ENCODE measurements at regions of chr7 and their contacts with region 1.

Region 1: DNA sequence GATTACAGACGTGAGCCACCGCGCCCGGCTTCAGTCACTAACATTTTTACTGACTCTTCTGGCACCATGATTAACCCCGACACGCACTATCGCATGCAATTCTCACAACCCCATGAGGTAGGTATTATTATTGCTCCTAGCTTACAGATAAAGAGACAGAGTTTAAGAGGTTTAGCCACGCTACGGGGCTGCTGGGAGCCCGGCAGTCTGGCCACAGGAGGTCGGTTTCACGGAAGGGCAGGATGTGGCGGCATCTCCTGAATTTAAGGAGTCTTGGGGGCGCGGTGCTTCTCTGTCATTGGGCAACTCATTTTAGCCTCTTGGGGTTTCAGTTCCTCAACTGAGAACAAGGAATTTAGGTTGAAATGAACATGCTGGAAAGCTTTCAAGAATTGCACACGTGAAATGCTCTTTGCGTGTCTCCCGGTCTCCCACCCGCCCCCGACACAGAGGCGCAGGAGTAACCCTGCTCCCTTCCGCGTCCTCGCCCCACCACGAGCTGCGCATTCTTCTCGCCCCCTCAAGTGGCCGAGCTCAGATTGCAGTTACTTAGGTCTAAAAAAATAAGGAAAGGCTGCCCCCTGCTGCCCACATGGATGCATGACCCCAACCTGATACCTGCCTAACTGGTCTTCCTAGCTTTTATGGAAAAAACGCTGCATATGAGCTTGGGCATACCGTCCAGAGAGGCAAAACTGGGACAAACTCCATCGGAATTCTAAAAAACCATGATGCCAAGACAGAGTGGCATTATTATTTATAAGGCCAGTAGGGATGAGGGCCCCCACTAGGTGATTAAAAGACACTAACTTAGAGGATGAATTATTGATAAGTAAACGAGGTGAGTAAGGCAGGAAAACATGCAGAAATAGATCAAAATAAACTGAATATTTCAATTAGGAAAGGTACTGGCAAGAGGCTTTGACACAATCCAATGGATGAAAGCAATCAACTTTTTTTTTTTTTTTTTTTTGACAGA is 12.4 kb downstream of the PRSS2 start:
- DNase-seq: peak; percentile 82
- H3K4me3 Mint-ChIP-seq: peak overlapping the region; percentile 67
- H3K27ac Mint-ChIP-seq: peak overlapping the region; percentile 100
- H3K4me1 Mint-ChIP-seq: peaks cover 17% of the 10 kb centered on the region
- H3K27me3 Mint-ChIP-seq: no peaks in the 10 kb centered on the region

Region 2: GRCh38 chr7:142626420-142627035 is 156.7 kb before region 1 on chr7:
- CTCF ChIA-PET with region 1: interaction called, 14 read pairs
- POLR2A ChIA-PET with region 1: no interaction called
- DNase-seq: peak; percentile 80
- H3K4me3 Mint-ChIP-seq: peak overlapping the region; percentile 79
- H3K27ac Mint-ChIP-seq: peak overlapping the region; percentile 90
- H3K4me1 Mint-ChIP-seq: peaks cover 10% of the 10 kb centered on the region
- H3K27me3 Mint-ChIP-seq: peaks cover 4% of the 10 kb centered on the region

Region 3: DNA sequence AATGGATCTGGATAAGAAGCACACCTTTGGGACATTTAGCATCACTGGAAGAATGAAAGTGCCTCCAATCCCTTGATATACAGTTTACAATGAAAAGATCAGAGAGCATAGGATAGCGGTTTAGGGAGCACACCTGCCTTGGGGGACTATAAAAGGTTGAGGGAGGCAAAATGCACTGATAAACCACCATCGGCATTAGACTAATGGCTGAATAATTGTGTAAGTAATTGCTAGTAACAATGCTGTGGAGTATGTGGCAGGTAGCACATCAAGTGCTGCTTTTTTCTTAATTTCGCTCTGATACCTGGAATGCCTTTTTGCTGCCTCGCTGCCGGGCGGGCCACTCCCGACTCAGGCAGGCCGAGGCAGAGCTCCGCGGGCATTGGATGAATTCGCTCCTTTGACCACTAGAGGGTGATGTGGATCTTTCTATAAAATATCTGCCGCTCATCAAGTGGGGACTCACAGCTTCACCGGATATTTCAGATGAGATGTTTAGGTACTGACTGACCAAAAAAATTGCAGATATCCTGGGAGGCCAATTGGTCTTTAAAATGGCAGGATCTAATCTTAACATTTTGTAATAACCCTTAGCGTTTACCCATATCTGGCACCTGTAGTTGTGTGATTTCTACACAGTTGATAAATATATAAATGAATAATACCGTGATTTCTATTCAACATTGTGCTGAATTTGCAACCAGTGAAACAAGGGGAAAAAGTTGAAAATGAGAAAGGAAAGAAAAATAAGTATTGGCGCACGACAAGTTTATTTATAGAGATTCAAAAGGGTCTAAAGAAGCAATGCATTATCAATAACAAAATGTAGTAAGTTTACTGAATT is 150.7 kb before region 1 on chr7:
- CTCF ChIA-PET with region 1: interaction called, 14 read pairs
- POLR2A ChIA-PET with region 1: interaction called, 13 read pairs
- DNase-seq: peak; percentile 62
- H3K4me3 Mint-ChIP-seq: no peak overlapping the region
- H3K27ac Mint-ChIP-seq: no peak overlapping the region
- H3K4me1 Mint-ChIP-seq: peaks cover 19% of the 10 kb centered on the region
- H3K27me3 Mint-ChIP-seq: peaks cover 5% of the 10 kb centered on the region

Region 4: DNA sequence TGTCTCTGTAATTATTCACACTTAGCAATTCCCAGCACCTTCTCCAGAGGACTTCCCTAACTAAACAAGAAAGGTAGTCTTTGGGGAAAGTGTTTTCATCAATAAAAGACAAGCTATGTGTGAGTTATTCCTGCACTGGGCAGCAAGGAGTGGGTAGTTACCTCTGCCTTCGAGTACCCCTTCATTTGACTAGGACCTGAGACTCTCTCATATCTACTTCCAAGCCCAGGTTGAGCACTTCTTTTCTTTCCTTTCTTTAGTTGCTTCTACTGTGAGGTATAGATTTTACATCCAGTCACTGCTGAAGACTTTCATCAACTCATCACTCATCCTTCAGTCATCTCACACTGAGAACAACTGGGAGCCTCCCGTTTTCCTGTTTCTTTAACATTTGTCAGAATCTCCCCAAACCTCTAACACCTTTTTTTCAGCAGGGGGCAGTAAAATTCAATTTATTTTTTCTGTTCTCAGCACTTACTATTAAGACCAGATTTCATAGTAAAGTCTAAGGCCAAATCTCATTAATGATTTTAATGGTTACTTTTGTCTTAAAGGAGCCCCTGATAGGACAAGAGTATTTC is 114.0 kb before region 1 on chr7:
- CTCF ChIA-PET with region 1: interaction called, 19 read pairs
- POLR2A ChIA-PET with region 1: no interaction called
- DNase-seq: no peak
- H3K4me3 Mint-ChIP-seq: no peak overlapping the region
- H3K27ac Mint-ChIP-seq: no peak overlapping the region
- H3K4me1 Mint-ChIP-seq: peaks cover 31% of the 10 kb centered on the region
- H3K27me3 Mint-ChIP-seq: no peaks in the 10 kb centered on the region

Region 5: GRCh38 chr7:142711746-142712619 is 71.2 kb before region 1 on chr7:
- CTCF ChIA-PET with region 1: interaction called, 18 read pairs
- POLR2A ChIA-PET with region 1: interaction called, 4 read pairs
- DNase-seq: peak; percentile 36
- H3K4me3 Mint-ChIP-seq: peak overlapping the region; percentile 66
- H3K27ac Mint-ChIP-seq: peak overlapping the region; percentile 90
- H3K4me1 Mint-ChIP-seq: peaks cover 79% of the 10 kb centered on the region
- H3K27me3 Mint-ChIP-seq: no peaks in the 10 kb centered on the region

Region 6: GRCh38 chr7:142796608-142797385 is 13.6 kb after region 1 on chr7:
- CTCF ChIA-PET with region 1: interaction called, 19 read pairs
- POLR2A ChIA-PET with region 1: interaction called, 66 read pairs
- DNase-seq: no peak
- H3K4me3 Mint-ChIP-seq: peak overlapping the region; percentile 100
- H3K27ac Mint-ChIP-seq: peak overlapping the region; percentile 100
- H3K4me1 Mint-ChIP-seq: peaks cover 64% of the 10 kb centered on the region
- H3K27me3 Mint-ChIP-seq: no peaks in the 10 kb centered on the region

Region 7: GRCh38 chr7:142811154-142811737 is 28.0 kb after region 1 on chr7:
- CTCF ChIA-PET with region 1: interaction called, 176 read pairs
- POLR2A ChIA-PET with region 1: interaction called, 103 read pairs
- DNase-seq: peak; percentile 74
- H3K4me3 Mint-ChIP-seq: peak overlapping the region; percentile 54
- H3K27ac Mint-ChIP-seq: peak overlapping the region; percentile 88
- H3K4me1 Mint-ChIP-seq: peaks cover 81% of the 10 kb centered on the region
- H3K27me3 Mint-ChIP-seq: peaks cover 3% of the 10 kb centered on the region